ENCODE measurements at regions of chr4 and their contacts with region 1.

Region 1: DNA sequence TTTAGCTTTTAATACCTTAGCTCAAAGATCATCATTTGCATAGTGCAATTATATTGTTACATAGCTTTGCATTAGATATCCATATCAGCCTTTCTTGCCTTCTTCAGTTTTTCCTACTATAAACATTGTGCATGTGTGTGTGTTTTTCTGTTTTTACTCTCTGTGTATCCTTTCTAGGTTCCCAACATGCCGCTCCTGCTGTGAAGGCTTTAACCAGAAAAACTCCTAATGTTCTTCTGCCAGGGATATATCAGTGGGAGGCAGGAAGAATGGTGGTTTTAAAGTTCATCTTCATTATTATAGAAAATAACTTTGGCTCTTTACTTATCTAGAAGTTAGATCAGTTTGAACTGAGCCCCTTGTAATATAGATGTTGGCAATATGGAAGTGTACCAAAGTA is 61.2 kb downstream of the CPE start:
- DNase-seq: no peak
- ATAC-seq: no peak
- H3K4me3 ChIP-seq: no peak overlapping the region
- H3K27ac ChIP-seq: no peak overlapping the region
- H3K4me1 ChIP-seq: peaks cover 6% of the 10 kb centered on the region; the same call in 1 of the 2 replicates
- H3K27me3 ChIP-seq: no peaks in the 10 kb centered on the region
- CTCF ChIP-seq: no peak
- EP300 ChIP-seq: no peak
- POLR2A ChIP-seq: no peak
- RAD21 ChIP-seq: no peak

Region 2: DNA sequence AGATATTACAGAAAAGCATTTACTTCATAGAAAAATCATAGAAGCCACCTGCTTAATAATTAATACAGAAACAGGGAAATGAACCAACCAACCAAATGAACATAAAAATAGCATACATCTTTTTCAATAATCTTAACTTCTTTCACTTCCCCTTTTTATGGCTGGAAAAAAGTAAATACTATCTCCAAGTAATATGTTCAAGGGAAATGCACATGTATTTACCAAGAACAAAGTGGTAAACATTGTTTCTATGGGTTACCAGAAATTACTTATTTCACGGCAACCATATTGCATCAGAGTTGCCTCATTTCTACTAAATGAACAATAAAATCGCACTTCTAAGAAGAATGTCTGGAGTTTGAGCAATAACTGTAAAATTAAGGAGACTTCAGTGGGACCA is 1624.2 kb before region 1 on chr4:
- CTCF ChIA-PET with region 1: no interaction called
- POLR2A ChIA-PET with region 1: no interaction called
- in situ Hi-C with region 1: no loop called
- intact Hi-C with region 1: loop called (anchors 10 kb)
- DNase-seq: no peak
- ATAC-seq: no peak
- H3K4me3 ChIP-seq: no peak overlapping the region
- H3K27ac ChIP-seq: no peak overlapping the region
- H3K4me1 ChIP-seq: no peaks in the 10 kb centered on the region
- H3K27me3 ChIP-seq: no peaks in the 10 kb centered on the region
- CTCF ChIP-seq: no peak
- EP300 ChIP-seq: no peak
- POLR2A ChIP-seq: no peak
- RAD21 ChIP-seq: no peak

Measured in HepG2 (cell line).